Panc1 (cell line): ENCODE measurements at regions of chr4 and their contacts with region 1.

Region 1: DNA sequence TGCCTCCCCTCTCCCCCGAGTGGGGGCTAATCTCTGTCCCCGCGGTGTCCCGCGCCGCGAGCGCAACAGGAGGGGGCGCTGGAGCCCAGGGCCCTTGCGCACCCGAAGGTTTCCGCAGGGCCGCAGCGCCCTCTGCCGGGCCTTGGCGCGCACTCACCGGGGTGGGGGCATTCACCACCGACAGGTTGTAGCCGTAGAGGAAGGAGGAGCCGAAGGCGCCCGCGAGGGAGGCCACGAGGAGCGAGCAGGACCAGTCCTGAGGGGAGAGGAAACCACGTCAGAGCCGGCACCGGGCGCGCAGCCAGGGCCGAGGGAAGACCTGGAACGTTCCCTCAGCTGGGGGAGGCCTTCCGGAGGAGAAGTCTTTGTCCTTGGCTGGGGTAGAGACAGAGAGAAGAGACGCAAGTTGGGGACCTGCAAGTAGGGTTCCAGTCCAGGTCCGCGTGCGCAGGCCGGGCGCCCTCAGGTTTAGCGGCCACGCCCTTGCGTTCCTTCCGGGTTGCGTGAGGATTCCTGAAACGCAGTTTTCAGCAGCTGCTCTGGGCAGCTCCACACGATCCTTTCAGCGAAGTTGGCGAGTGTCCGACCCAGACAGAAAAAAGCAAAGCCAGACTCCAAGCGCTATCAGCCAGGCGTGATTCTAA is 2.4 kb downstream of the SLC2A9 start:
- DNase-seq: peak; percentile 57
- ATAC-seq: peak; percentile 97
- H3K4me3 ChIP-seq: peak overlapping the region; percentile 46 to 68
- H3K27ac ChIP-seq: peak overlapping the region; percentile 80
- H3K4me1 ChIP-seq: peaks cover 8% of the 10 kb centered on the region
- H3K27me3 ChIP-seq: no peaks in the 10 kb centered on the region
- CTCF ChIP-seq: peak; percentile 96

Region 2: DNA sequence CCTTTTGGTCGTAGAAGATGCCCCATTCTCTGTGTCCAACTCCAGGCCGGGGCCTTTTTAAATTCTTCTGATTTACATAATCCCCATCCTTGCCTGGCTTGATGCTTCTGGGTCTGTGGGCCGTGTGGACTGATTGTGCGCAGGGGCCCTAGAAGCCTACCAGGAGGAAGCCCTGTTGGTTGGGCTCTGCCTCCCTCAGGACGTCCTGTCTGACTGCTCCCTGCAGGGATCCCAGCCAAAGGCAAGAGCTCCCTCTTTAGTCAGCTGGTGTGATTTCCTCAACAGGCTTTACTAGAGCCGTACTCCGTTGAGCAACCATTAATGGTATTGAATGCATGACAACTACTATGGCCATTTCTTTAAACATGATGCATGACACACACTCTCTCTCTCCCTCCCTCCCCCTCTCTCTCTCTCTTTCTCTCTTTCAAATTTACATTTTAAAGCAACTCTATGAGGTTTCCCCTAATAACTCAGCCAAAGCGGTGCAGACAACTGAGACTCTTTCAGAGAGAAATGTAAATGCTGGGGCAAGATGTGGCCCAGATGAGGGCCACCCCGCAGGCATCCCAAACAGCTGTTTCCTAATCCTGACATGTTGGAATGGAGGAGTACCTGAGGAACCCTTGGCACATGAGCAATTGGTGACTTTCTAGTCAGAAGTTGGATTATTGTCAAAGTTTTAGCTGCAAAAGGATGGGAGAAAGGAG is 120.2 kb before region 1 on chr4:
- CTCF ChIA-PET with region 1: no interaction called
- POLR2A ChIA-PET with region 1: interaction called, 5 read pairs
- in situ Hi-C with region 1: no loop called
- intact Hi-C with region 1: loop called (anchors 5 kb)
- DNase-seq: peak; percentile 0
- ATAC-seq: peak; percentile 82
- H3K4me3 ChIP-seq: no peak overlapping the region
- H3K27ac ChIP-seq: no peak overlapping the region
- H3K4me1 ChIP-seq: no peaks in the 10 kb centered on the region
- H3K27me3 ChIP-seq: no peaks in the 10 kb centered on the region
- CTCF ChIP-seq: peak; percentile 49